MCF 10A (cell line): ENCODE measurements at regions of chr21 and their contacts with region 1.

Region 1: GRCh38 chr21:33901412-33902288 is 14.0 kb downstream of the ATP5PO start:
- DNase-seq: peak; percentile 64
- H3K4me3 Mint-ChIP-seq: no peak overlapping the region
- H3K27ac Mint-ChIP-seq: no peak overlapping the region
- H3K4me1 Mint-ChIP-seq: no peaks in the 10 kb centered on the region
- H3K27me3 Mint-ChIP-seq: no peaks in the 10 kb centered on the region
- CTCF ChIP-seq: peak; percentile 55

Region 2: GRCh38 chr21:33915368-33916199 is 13.9 kb after region 1 on chr21 and contains the start of gene ATP5PO:
- CTCF ChIA-PET with region 1: interaction called, 21 read pairs
- POLR2A ChIA-PET with region 1: interaction called, 10 read pairs
- intact Hi-C with region 1: no loop called
- DNase-seq: peak; percentile 97
- H3K4me3 Mint-ChIP-seq: peak within 1 kb of the TSS; percentile 95
- H3K27ac Mint-ChIP-seq: peak within 1 kb of the TSS; percentile 98
- H3K4me1 Mint-ChIP-seq: peaks cover 22% of the 10 kb centered on the region
- H3K27me3 Mint-ChIP-seq: no peaks in the 10 kb centered on the region
- CTCF ChIP-seq: no peak
- total RNA-seq, gene ATP5PO: 147 and 196 TPM in 2 replicates